Calu3 (cell line): ENCODE measurements at regions of chr12 and their contacts with region 1.

Region 1: GRCh38 chr12:47837190-47838171 is 17.8 kb upstream of the HDAC7 start:
- DNase-seq: peak; percentile 67
- H3K4me3 Mint-ChIP-seq: no peak overlapping the region
- H3K27ac Mint-ChIP-seq: no peak overlapping the region
- H3K4me1 Mint-ChIP-seq: peaks cover 14% of the 10 kb centered on the region
- H3K27me3 Mint-ChIP-seq: peaks cover 12% of the 10 kb centered on the region
- CTCF ChIP-seq: peak; percentile 79

Region 2: DNA sequence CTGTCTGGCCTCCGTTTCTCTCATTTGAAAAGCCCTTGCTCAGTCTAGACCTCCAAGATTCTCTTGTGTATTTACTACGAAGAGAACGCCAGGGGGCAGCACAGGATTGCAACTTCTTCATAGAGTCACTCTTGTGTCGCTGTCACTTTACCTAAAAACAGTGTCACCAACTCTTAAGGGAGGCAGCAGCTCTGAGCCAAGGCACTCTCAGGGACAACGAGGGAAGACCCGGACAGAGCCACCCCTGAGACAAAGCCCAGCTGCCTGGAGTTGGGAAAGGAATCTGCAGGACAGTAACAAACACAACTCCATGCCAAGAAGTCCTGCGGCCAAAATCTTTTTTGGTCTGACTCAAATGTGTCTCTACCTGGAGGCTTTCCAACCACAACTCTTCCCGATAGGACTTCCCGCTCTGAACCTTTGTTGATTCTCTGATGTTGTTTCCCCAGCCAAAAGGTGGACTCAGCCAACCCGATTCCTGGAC is 122.0 kb before region 1 on chr12:
- CTCF ChIA-PET with region 1: interaction called, 11 read pairs
- intact Hi-C with region 1: loop called (anchors 1 kb)
- DNase-seq: peak; percentile 61
- H3K4me3 Mint-ChIP-seq: no peak overlapping the region
- H3K27ac Mint-ChIP-seq: no peak overlapping the region
- H3K4me1 Mint-ChIP-seq: no peaks in the 10 kb centered on the region
- H3K27me3 Mint-ChIP-seq: no peaks in the 10 kb centered on the region
- CTCF ChIP-seq: peak; percentile 77

Region 3: GRCh38 chr12:47742253-47742825 is 95.1 kb before region 1 on chr12:
- CTCF ChIA-PET with region 1: interaction called, 16 read pairs
- intact Hi-C with region 1: no loop called
- DNase-seq: peak; percentile 78
- H3K4me3 Mint-ChIP-seq: no peak overlapping the region
- H3K27ac Mint-ChIP-seq: no peak overlapping the region
- H3K4me1 Mint-ChIP-seq: peaks cover 27% of the 10 kb centered on the region
- H3K27me3 Mint-ChIP-seq: no peaks in the 10 kb centered on the region
- CTCF ChIP-seq: peak; percentile 93

Region 4: GRCh38 chr12:47767216-47767724 is 70.2 kb before region 1 on chr12:
- CTCF ChIA-PET with region 1: interaction called, 12 read pairs
- intact Hi-C with region 1: no loop called
- DNase-seq: peak; percentile 79
- H3K4me3 Mint-ChIP-seq: no peak overlapping the region
- H3K27ac Mint-ChIP-seq: no peak overlapping the region
- H3K4me1 Mint-ChIP-seq: peaks cover 3% of the 10 kb centered on the region
- H3K27me3 Mint-ChIP-seq: no peaks in the 10 kb centered on the region
- CTCF ChIP-seq: peak; percentile 32

Region 5: GRCh38 chr12:47779301-47779942 is 58.1 kb before region 1 on chr12:
- CTCF ChIA-PET with region 1: interaction called, 7 read pairs
- intact Hi-C with region 1: loop called (anchors 5 kb)
- DNase-seq: peak; percentile 86
- H3K4me3 Mint-ChIP-seq: no peak overlapping the region
- H3K27ac Mint-ChIP-seq: no peak overlapping the region
- H3K4me1 Mint-ChIP-seq: no peaks in the 10 kb centered on the region
- H3K27me3 Mint-ChIP-seq: no peaks in the 10 kb centered on the region
- CTCF ChIP-seq: peak; percentile 74

Region 6: DNA sequence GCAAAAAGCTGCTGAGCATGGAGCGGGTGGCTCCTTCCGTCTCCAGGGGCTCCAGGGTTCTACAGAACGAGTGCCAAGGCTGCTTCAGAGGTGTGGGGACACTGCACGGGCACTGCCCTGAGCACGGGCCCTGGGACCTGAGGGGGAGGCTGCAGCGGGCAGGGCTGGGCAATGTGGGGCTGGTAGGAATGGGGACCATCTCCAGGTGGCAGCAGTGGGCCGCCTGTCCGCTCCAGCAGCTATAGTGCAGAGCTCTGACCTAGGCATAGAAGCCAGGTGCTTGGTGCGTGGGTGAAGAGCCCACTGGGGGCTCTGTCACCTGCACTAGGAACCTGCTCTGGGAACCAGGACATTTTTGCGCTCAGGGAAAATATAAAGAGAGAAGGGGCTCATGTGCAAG is 40.0 kb before region 1 on chr12:
- CTCF ChIA-PET with region 1: interaction called, 22 read pairs
- intact Hi-C with region 1: loop called (anchors 1 kb)
- DNase-seq: no peak
- H3K4me3 Mint-ChIP-seq: no peak overlapping the region
- H3K27ac Mint-ChIP-seq: no peak overlapping the region
- H3K4me1 Mint-ChIP-seq: peaks cover 19% of the 10 kb centered on the region
- H3K27me3 Mint-ChIP-seq: no peaks in the 10 kb centered on the region
- CTCF ChIP-seq: no peak

Region 7: GRCh38 chr12:47819138-47819895 is 18.2 kb before region 1 on chr12:
- CTCF ChIA-PET with region 1: interaction called, 17 read pairs
- intact Hi-C with region 1: no loop called
- DNase-seq: peak; percentile 52
- H3K4me3 Mint-ChIP-seq: peak overlapping the region; percentile 88
- H3K27ac Mint-ChIP-seq: no peak overlapping the region
- H3K4me1 Mint-ChIP-seq: peaks cover 64% of the 10 kb centered on the region
- H3K27me3 Mint-ChIP-seq: no peaks in the 10 kb centered on the region
- CTCF ChIP-seq: no peak